ENCODE measurements at regions of chr14 and their contacts with region 1.

Region 1: GRCh38 chr14:105203057-105203531 is 22.0 kb upstream of the NUDT14 start:
- DNase-seq: peak; percentile 49 to 63 (median 53)
- H3K4me3 ChIP-seq: no peak overlapping the region
- H3K4me3 Mint-ChIP-seq: no peak overlapping the region
- H3K27ac ChIP-seq: no peak overlapping the region
- H3K27ac Mint-ChIP-seq: peak overlapping the region in 1 of 7 donors; percentile 40
- H3K4me1 ChIP-seq: peaks cover 21% of the 10 kb centered on the region
- H3K4me1 Mint-ChIP-seq: peaks cover 3 to 22% (median 13%) of the 10 kb centered on the region in 4 donors
- H3K27me3 ChIP-seq: no peaks in the 10 kb centered on the region
- H3K27me3 Mint-ChIP-seq: peaks cover 11 to 14% of the 10 kb centered on the region in 2 donors

Region 2: DNA sequence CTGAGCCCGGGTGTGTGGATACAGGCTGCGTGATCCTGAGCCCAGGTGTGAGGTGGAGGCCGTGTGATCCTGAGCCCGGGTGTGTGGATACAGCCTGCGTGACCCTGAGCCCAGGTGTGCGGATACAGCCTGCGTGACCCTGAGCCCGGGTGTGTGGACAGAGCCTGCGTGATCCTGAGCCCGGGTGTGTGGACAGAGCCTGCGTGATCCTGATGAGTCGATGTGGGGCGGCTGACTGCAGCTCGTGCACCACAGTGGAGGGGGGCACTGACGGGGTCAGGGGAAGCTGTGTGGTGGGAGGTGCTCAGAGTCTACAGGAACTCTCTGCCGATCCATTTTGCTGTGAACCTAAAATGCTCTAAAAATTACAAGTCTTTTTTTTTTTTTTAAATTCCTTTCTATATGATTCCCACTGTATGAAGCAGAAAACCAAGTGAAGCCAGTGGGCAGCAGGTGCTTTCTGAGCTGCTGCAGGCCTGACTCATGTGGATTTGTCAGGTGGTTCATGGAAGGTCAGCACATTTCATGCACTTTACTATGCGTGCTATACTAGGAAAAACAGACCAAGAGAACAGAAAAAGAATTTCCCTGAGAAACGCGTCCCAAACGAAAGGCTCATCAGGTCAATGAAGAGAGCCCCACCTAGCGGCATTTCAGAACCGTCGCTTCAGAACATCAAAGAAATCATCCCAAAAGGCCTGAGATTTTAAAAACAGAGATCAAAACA is 78.4 kb after region 1 on chr14:
- CTCF ChIA-PET with region 1: interaction called, 3 read pairs
- POLR2A ChIA-PET with region 1: no interaction called
- intact Hi-C with region 1: loop called (anchors 1 kb)
- DNase-seq: peak in 4 of 5 donors; percentile 26 to 42 (median 34)
- H3K4me3 ChIP-seq: no peak overlapping the region
- H3K4me3 Mint-ChIP-seq: no peak overlapping the region
- H3K27ac ChIP-seq: no peak overlapping the region
- H3K27ac Mint-ChIP-seq: peak overlapping the region in 2 of 7 donors; percentile 68 to 85
- H3K4me1 ChIP-seq: no peaks in the 10 kb centered on the region
- H3K4me1 Mint-ChIP-seq: peaks cover 18 to 48% (median 26%) of the 10 kb centered on the region in 4 donors
- H3K27me3 ChIP-seq: no peaks in the 10 kb centered on the region
- H3K27me3 Mint-ChIP-seq: no peaks in the 10 kb centered on the region

Region 3: GRCh38 chr14:105337966-105338741 is 135.1 kb after region 1 on chr14:
- CTCF ChIA-PET with region 1: no interaction called
- POLR2A ChIA-PET with region 1: no interaction called
- intact Hi-C with region 1: no loop called
- DNase-seq: no peak
- H3K4me3 ChIP-seq: no peak overlapping the region
- H3K4me3 Mint-ChIP-seq: no peak overlapping the region
- H3K27ac ChIP-seq: no peak overlapping the region
- H3K27ac Mint-ChIP-seq: no peak overlapping the region
- H3K4me1 ChIP-seq: no peaks in the 10 kb centered on the region
- H3K4me1 Mint-ChIP-seq: peaks cover 1 to 13% (median 3%) of the 10 kb centered on the region in 4 donors
- H3K27me3 ChIP-seq: no peaks in the 10 kb centered on the region
- H3K27me3 Mint-ChIP-seq: no peaks in the 10 kb centered on the region

Measured in CD4-positive, alpha-beta memory T cell (primary cell).